ENCODE measurements at regions of chr1 and their contacts with region 1.

Region 1: GRCh38 chr1:35726450-35727433 is 8.1 kb upstream of the C1orf216 start:
- DNase-seq: peak in 1 of 2 experiments; percentile 69
- H3K4me3 ChIP-seq: no peak overlapping the region
- H3K27ac ChIP-seq: no peak overlapping the region
- H3K4me1 ChIP-seq: peaks cover 0 to 6% (median 3%) of the 10 kb centered on the region in 4 experiments; a peak in 4 of 7 replicates
- H3K27me3 ChIP-seq: no peaks in the 10 kb centered on the region
- CTCF ChIP-seq: peak; percentile 81 to 97 (median 87)
- EP300 ChIP-seq: no peak
- POLR2A ChIP-seq: no peak
- RAD21 ChIP-seq: peak; percentile 91 to 94

Region 2: GRCh38 chr1:35577071-35577998 is 149.4 kb before region 1 on chr1:
- CTCF ChIA-PET with region 1: interaction called, 49 read pairs
- POLR2A ChIA-PET with region 1: interaction called, 7 read pairs
- DNase-seq: peak in 1 of 2 experiments; percentile 79
- H3K4me3 ChIP-seq: peak overlapping the region; percentile 30 to 58 (median 46)
- H3K27ac ChIP-seq: no peak overlapping the region
- H3K4me1 ChIP-seq: peaks cover 7 to 20% (median 15%) of the 10 kb centered on the region in 4 experiments
- H3K27me3 ChIP-seq: peaks cover 60 to 69% (median 67%) of the 10 kb centered on the region in 4 experiments
- CTCF ChIP-seq: no peak
- EP300 ChIP-seq: no peak
- POLR2A ChIP-seq: no peak
- RAD21 ChIP-seq: no peak

Region 3: DNA sequence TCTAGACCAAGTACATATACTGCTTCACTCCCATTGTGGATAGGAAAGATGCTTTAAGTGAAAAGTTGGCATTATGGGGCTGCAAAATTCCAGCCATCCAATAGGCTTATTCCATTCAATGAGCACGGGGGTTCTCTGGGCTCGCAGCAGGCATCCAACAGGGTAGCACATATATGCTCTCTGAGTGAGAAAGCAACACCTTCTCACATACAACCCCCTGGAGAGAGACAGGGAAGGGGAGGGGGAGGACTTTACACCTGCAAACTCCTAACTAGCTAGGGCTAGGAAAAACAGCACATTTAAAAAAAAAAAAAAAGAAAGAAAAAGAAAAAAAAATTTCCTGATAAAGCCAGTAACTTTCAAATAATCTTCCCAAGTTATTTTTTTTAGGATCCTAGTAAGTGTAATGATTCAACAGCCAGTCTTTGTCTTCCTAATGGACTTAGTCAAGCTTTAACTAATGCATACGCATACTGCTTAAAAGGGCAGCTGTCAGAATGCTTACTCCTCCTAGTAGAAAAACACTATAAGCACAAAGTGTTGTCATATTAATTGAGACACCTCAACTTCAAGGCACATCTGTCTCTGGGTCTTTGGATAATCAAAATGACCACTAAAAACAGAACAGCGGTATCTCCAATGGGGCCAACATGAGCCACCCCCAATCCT is 104.1 kb before region 1 on chr1:
- CTCF ChIA-PET with region 1: interaction called, 10 read pairs
- POLR2A ChIA-PET with region 1: no interaction called
- DNase-seq: no peak
- H3K4me3 ChIP-seq: no peak overlapping the region
- H3K27ac ChIP-seq: no peak overlapping the region
- H3K4me1 ChIP-seq: peaks cover 7 to 17% (median 13%) of the 10 kb centered on the region in 4 experiments
- H3K27me3 ChIP-seq: no peaks in the 10 kb centered on the region
- CTCF ChIP-seq: no peak
- EP300 ChIP-seq: no peak
- POLR2A ChIP-seq: no peak
- RAD21 ChIP-seq: no peak

Region 4: DNA sequence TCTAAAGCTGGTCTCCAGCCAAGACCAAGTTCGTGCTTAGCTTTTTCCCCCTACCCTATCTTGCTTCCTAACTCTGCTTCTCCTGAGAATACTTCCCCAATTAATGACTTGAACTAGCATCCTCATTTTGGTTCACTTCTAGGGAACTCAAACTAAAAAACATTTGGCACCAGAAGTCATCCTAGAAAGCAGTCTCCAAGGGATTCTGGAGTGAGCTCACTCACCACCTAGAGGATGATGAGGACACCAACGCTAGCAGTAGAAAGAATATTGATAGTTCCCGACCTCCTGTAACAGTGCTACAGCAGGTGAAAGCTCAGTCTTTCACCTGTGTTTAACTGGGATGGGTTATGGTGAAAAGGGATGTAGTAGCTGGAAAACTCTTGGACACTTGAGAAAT is 80.7 kb before region 1 on chr1:
- CTCF ChIA-PET with region 1: interaction called, 12 read pairs
- POLR2A ChIA-PET with region 1: no interaction called
- DNase-seq: no peak
- H3K4me3 ChIP-seq: no peak overlapping the region
- H3K27ac ChIP-seq: no peak overlapping the region
- H3K4me1 ChIP-seq: no peaks in the 10 kb centered on the region
- H3K27me3 ChIP-seq: no peaks in the 10 kb centered on the region
- CTCF ChIP-seq: peak in 2 of 3 experiments; percentile 23 to 48; a peak in 1 of 4 replicates
- EP300 ChIP-seq: no peak
- POLR2A ChIP-seq: no peak
- RAD21 ChIP-seq: peak; percentile 32 to 48

Region 5: DNA sequence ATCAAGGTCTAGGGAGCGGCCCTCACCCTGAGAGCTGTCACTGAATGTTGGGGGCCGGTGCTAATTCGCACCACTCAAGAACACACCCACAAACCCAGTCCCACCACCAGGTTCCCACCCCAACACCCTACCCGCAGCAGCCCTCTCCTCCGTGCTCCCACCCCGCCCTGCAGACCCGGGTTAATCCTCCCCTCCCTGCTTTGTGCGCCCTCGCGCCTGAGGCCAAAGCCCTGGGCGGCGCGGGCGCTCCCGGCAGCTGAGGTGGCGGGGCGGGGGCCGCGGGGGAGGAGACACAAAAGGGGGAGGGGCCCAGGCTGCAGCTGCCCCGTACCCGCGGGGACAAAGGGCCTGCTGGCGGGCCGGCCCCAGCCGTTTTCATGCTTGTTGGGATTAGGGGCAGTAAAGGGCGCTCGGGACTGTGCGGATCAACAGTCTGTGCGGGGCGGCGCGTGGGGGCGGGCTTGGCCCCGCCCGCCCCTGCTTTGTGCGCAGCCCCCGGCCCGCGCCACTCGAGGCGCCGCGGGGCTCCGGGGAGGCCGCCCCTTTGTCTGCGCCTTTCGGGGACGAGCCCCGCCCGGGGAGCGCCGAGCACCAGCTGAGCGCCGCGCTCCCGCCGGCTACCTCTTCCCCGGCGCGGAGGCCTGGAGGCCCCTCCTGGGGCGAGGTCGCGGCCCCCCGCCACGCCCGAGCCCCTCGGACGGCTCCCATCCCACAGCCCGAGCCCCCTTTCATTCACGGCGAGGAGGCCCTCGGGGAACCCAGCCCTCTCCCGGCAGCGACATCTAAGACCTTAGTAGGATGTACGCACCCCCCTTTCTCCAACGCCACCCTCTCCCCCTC is 18.9 kb before region 1 on chr1:
- CTCF ChIA-PET with region 1: interaction called, 122 read pairs
- POLR2A ChIA-PET with region 1: interaction called, 4 read pairs
- DNase-seq: peak in 1 of 2 experiments; percentile 79
- H3K4me3 ChIP-seq: peak overlapping the region; percentile 45 to 71 (median 51)
- H3K27ac ChIP-seq: no peak overlapping the region
- H3K4me1 ChIP-seq: peaks cover 3 to 20% (median 11%) of the 10 kb centered on the region in 4 experiments
- H3K27me3 ChIP-seq: peaks cover 0 to 18% (median 12%) of the 10 kb centered on the region in 4 experiments; a peak in 6 of 7 replicates
- CTCF ChIP-seq: no peak
- EP300 ChIP-seq: no peak
- POLR2A ChIP-seq: peak in 1 of 2 experiments; percentile 54; a peak in 1 of 3 replicates
- RAD21 ChIP-seq: no peak

Region 6: DNA sequence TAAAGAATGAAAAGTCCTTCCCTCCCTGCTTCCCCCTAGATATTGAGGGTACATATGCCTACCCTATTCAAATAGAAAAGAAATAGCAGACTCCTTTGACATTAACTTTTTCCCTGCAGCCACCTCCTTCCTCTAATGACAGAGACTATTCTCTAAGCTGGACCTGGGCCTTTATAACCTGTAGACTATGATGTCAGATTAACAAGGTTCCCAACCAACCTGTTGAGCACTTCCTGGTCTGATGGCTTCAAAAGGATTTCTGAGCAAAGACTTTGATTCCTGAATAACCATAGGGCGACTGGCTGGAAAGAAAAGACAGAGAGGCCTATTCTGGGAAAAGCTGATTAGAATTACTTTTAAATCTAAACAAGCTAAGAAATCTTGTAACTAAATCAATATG is 10.4 kb after region 1 on chr1:
- CTCF ChIA-PET with region 1: interaction called, 60 read pairs
- POLR2A ChIA-PET with region 1: interaction called, 3 read pairs
- DNase-seq: no peak
- H3K4me3 ChIP-seq: no peak overlapping the region
- H3K27ac ChIP-seq: no peak overlapping the region
- H3K4me1 ChIP-seq: no peaks in the 10 kb centered on the region
- H3K27me3 ChIP-seq: no peaks in the 10 kb centered on the region; a peak in 1 of 7 replicates
- CTCF ChIP-seq: no peak
- EP300 ChIP-seq: no peak
- POLR2A ChIP-seq: no peak
- RAD21 ChIP-seq: no peak

Region 7: GRCh38 chr1:35769188-35769758 is 42.5 kb after region 1 on chr1:
- CTCF ChIA-PET with region 1: interaction called, 13 read pairs
- POLR2A ChIA-PET with region 1: interaction called, 4 read pairs
- DNase-seq: peak; percentile 73 to 91
- H3K4me3 ChIP-seq: peak overlapping the region; percentile 76 to 92 (median 80)
- H3K27ac ChIP-seq: peak overlapping the region; percentile 80
- H3K4me1 ChIP-seq: no peaks in the 10 kb centered on the region; a peak in 1 of 7 replicates
- H3K27me3 ChIP-seq: no peaks in the 10 kb centered on the region
- CTCF ChIP-seq: peak in 1 of 3 experiments; percentile 23; a peak in 1 of 4 replicates
- EP300 ChIP-seq: no peak
- POLR2A ChIP-seq: peak in 1 of 2 experiments; percentile 81; a peak in 1 of 3 replicates
- RAD21 ChIP-seq: no peak

Measured in H1 (cell line).